HEK293 (cell line): ENCODE measurements at regions of chr14 and their contacts with region 1.

Region 1: GRCh38 chr14:21525962-21526671 is at the start of gene SALL2:
- H3K4me3 ChIP-seq: peak within 1 kb of the TSS; percentile 81
- H3K27ac ChIP-seq: peak within 1 kb of the TSS; percentile 66
- H3K4me1 ChIP-seq: peaks cover 17% of the 10 kb centered on the region
- CTCF ChIP-seq: no peak

Region 2: GRCh38 chr14:21437063-21437901 is 88.8 kb before region 1 on chr14:
- CTCF ChIA-PET with region 1: no interaction called
- POLR2A ChIA-PET with region 1: interaction called, 14 read pairs
- H3K4me3 ChIP-seq: peak overlapping the region; percentile 97
- H3K27ac ChIP-seq: peak overlapping the region; percentile 90
- H3K4me1 ChIP-seq: peaks cover 6% of the 10 kb centered on the region; the same call in 1 of the 2 replicates
- CTCF ChIP-seq: no peak

Region 3: DNA sequence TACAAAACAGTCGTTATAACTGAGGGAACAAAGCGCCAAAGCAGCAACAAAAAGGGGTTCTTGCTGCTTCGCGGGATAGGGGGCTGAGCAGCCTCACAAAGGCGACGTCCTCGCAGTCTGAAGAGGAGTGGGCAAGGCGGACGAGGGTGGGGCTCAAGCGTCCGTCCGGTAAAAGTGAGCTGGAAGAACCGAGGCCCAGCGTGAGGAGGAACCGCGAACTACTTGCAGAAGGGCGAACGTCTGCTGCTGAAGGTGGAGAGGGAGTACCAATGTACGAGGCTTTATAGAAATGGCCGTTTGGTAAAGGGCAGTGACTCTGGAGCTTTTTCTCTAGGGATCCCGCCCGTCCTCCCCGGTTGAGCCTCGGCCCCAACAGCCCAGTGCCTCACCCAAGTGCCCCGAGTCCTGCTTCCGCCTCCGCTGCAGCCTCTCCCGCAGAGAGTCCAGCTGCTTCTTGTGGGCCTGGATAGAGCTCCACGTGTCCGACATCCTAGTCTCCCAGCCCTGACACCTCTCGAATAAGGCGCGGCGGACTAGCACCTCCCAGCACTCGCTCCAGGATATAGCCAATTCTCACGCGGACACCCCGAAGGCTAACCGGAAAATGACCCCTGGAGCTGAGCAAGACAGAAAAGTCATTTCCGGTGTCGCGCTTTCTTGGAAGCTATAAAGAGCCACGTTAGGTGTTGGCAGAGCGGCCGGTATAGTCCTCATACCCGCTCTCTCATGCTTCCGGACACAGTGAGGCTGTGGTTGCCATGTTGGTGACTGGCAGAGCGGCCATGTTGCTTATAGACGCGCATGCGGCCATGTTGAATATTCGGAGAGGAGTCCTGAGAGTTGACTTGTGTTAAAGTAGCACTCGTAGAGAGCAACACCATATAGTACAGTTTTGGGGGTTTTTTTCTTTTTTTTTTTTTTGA is 15.1 kb before region 1 on chr14 and contains the start of gene METTL3:
- CTCF ChIA-PET with region 1: no interaction called
- POLR2A ChIA-PET with region 1: interaction called, 71 read pairs
- H3K4me3 ChIP-seq: peak within 1 kb of the TSS; percentile 77
- H3K27ac ChIP-seq: peak within 1 kb of the TSS; percentile 72
- H3K4me1 ChIP-seq: 0 out of 2 replicates have a peak, but pooled peaks cover 4% of the 10 kb centered on the region
- CTCF ChIP-seq: peak; percentile 26; the same call in 1 of the 2 replicates

Region 4: DNA sequence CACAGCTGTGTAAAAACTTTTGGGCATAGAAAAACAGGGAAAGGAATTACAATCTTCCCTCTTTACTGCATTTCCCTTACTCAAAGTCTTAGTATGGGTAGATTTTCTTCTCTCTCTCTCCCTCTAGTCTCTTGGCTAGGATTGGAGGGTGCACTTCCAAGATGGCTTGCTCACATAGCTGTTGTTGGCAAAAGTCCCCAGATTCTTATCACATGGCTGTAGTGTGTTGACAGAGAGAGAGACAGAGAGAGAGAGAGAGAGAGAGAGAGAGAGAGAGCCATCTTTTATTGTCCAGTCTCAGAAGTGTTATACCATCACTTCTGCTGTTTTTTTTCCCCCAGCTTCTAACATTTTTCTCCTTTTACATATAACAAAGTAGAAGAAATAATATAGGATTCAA is 121.3 kb after region 1 on chr14:
- CTCF ChIA-PET with region 1: no interaction called
- POLR2A ChIA-PET with region 1: no interaction called
- H3K4me3 ChIP-seq: no peak overlapping the region
- H3K27ac ChIP-seq: no peak overlapping the region
- H3K4me1 ChIP-seq: no peaks in the 10 kb centered on the region
- CTCF ChIP-seq: no peak